ENCODE measurements at regions of chr2 and their contacts with region 1.

Region 1: GRCh38 chr2:206296128-206296527 is 21.7 kb downstream of the ZDBF2 start:
- DNase-seq: no peak
- H3K4me3 ChIP-seq: no peak overlapping the region
- H3K27ac ChIP-seq: no peak overlapping the region
- H3K4me1 ChIP-seq: no peaks in the 10 kb centered on the region
- H3K27me3 ChIP-seq: no peaks in the 10 kb centered on the region
- CTCF ChIP-seq: no peak
- POLR2A ChIP-seq: no peak

Region 2: GRCh38 chr2:206423149-206423548 is 127.0 kb after region 1 on chr2:
- intact Hi-C with region 1: no loop called
- DNase-seq: no peak
- H3K4me3 ChIP-seq: no peak overlapping the region
- H3K27ac ChIP-seq: no peak overlapping the region
- H3K4me1 ChIP-seq: no peaks in the 10 kb centered on the region
- H3K27me3 ChIP-seq: no peaks in the 10 kb centered on the region
- CTCF ChIP-seq: no peak
- POLR2A ChIP-seq: no peak

Region 3: DNA sequence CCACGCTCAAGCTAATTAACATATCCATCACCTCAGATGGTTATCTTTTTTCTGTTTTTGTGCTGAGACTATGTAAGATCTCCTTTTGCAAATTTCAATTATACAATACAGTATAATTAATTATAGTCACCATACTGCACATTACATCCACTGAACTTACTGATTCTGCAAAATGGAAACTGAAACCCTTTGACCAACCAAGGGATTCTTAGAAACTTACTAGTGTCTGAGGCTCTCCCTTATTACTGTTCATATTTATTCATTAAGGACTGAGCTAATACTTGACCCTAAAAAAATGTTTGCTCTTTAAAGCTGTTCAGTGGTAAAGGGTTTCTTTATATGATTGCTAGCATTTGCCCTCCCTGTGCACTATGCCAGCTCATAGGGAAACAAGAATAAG is 197.9 kb after region 1 on chr2:
- intact Hi-C with region 1: loop called (anchors 5 kb)
- DNase-seq: no peak
- H3K4me3 ChIP-seq: no peak overlapping the region
- H3K27ac ChIP-seq: no peak overlapping the region
- H3K4me1 ChIP-seq: no peaks in the 10 kb centered on the region
- H3K27me3 ChIP-seq: no peaks in the 10 kb centered on the region
- CTCF ChIP-seq: no peak
- POLR2A ChIP-seq: no peak